IMR-90 (cell line): ENCODE measurements at regions of chr1 and their contacts with region 1.

Region 1: GRCh38 chr1:244272471-244273261 is 179.0 kb downstream of the ADSS2 start:
- DNase-seq: peak; percentile 92
- ATAC-seq: peak; percentile 61
- H3K4me3 ChIP-seq: no peak overlapping the region
- H3K27ac ChIP-seq: no peak overlapping the region
- H3K4me1 ChIP-seq: peaks cover 9% of the 10 kb centered on the region; the same call in 1 of the 2 replicates
- H3K27me3 ChIP-seq: no peaks in the 10 kb centered on the region
- CTCF ChIP-seq: peak; percentile 100
- POLR2A ChIP-seq: no peak
- RAD21 ChIP-seq: peak; percentile 99

Region 2: DNA sequence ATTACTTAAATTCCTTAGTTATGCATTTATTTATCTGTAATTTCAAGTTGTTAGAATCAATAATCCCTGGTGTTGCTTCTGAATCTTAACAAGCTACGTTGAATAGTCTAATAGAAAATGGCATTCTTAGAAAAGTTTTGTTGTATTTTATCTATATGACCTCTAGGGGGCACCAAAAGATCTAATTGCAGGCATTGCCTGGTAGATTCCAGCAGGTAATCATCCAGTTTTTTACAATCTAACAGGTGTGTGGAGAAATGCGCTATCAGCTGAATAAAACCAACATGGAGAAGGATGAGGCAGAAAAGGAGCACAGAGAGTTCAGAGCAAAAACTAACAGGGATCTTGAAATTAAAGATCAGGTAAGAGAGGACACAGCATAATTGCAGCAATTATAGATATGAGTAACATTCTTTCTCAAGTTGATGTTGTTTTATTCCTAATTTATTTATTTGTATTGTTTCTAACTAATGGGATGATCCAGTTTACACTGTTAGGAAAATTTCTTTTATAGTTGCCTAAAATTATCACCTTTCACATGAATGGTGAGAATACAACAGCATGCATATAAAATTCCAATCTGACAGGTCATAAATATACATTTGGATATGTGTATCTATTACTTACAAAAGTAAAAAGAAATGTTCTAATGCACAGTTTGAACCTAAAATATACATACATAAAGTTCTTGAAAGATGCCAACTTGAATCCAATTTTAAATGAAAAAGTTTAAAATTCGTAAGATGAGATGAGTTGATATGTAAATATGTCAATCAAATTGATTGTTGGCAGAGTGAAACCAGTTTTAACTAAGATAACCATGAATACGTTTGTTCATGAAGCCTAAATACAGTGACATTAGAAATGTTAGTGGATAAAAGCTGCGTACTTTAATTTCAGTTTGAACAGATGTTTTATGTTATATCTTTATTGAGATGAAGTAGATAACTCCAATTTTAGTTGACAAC is 928.4 kb before region 1 on chr1:
- CTCF ChIA-PET with region 1: interaction called, 3 read pairs
- POLR2A ChIA-PET with region 1: no interaction called
- dilution Hi-C with region 1: no loop called
- in situ Hi-C with region 1: loop called (anchors 5 kb)
- intact Hi-C with region 1: loop called (anchors 1 kb)
- DNase-seq: peak; percentile 40
- ATAC-seq: peak; percentile 62; the same call in 1 of the 2 replicates
- H3K4me3 ChIP-seq: no peak overlapping the region
- H3K27ac ChIP-seq: no peak overlapping the region
- H3K4me1 ChIP-seq: no peaks in the 10 kb centered on the region
- H3K27me3 ChIP-seq: no peaks in the 10 kb centered on the region
- CTCF ChIP-seq: peak; percentile 72
- POLR2A ChIP-seq: no peak
- RAD21 ChIP-seq: peak; percentile 78

Region 3: GRCh38 chr1:243708210-243708609 is 564.5 kb before region 1 on chr1:
- CTCF ChIA-PET with region 1: interaction called, 4 read pairs
- POLR2A ChIA-PET with region 1: no interaction called
- dilution Hi-C with region 1: no loop called
- in situ Hi-C with region 1: no loop called
- intact Hi-C with region 1: loop called (anchors 2 kb)
- DNase-seq: no peak
- ATAC-seq: no peak
- H3K4me3 ChIP-seq: no peak overlapping the region
- H3K27ac ChIP-seq: no peak overlapping the region
- H3K4me1 ChIP-seq: peaks cover 2% of the 10 kb centered on the region; the same call in 1 of the 2 replicates
- H3K27me3 ChIP-seq: no peaks in the 10 kb centered on the region
- CTCF ChIP-seq: peak; percentile 42
- POLR2A ChIP-seq: no peak
- RAD21 ChIP-seq: peak; percentile 50

Region 4: GRCh38 chr1:243842978-243843511 is 429.6 kb before region 1 on chr1:
- CTCF ChIA-PET with region 1: no interaction called
- POLR2A ChIA-PET with region 1: no interaction called
- dilution Hi-C with region 1: no loop called
- in situ Hi-C with region 1: loop called (anchors 10 kb)
- intact Hi-C with region 1: loop called (anchors 2 kb)
- DNase-seq: peak; percentile 89
- ATAC-seq: peak; percentile 92
- H3K4me3 ChIP-seq: peak overlapping the region; percentile 25; the same call in 1 of the 2 replicates
- H3K27ac ChIP-seq: peak overlapping the region; percentile 78
- H3K4me1 ChIP-seq: peaks cover 5% of the 10 kb centered on the region
- H3K27me3 ChIP-seq: no peaks in the 10 kb centered on the region
- CTCF ChIP-seq: no peak
- POLR2A ChIP-seq: no peak
- RAD21 ChIP-seq: no peak

Region 5: DNA sequence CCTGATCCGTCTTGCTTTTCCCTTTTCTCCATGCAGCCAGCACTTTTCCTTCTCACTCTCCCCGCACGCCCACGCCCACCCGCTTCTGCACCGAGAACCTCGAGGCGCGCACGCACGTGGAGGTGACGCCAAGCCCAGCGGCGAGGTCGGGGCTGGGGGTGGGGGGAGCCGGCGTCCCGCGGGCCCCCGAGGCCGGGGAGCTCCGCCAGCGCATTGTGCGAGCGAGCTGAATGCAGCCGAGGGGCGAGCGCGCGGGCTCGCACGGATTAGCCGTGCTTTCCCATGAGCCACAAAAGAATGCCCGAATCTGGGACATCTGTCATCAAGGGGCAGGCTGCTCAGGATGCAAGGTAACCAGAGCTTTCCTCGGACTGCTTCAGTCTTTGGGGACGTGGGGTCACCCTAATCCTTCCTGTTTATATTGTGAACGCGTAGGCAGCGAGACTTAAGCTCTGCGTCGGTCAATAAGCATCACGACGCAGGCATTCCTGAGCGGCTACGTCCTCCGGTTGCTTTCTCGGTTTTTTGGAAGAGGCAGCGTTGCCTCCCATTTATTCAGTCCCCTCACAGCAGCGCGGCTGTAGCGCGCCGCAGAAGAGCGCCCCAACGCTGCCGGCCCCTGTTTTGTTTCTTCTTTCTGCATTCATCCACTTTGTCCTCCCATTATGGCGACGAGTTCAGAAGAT is 355.3 kb before region 1 on chr1:
- CTCF ChIA-PET with region 1: no interaction called
- POLR2A ChIA-PET with region 1: interaction called, 3 read pairs
- dilution Hi-C with region 1: no loop called
- in situ Hi-C with region 1: no loop called
- intact Hi-C with region 1: loop called (anchors 2 kb)
- DNase-seq: peak; percentile 93
- ATAC-seq: peak; percentile 97
- H3K4me3 ChIP-seq: peak overlapping the region; percentile 51
- H3K27ac ChIP-seq: peak overlapping the region; percentile 27
- H3K4me1 ChIP-seq: peaks cover 8% of the 10 kb centered on the region
- H3K27me3 ChIP-seq: no peaks in the 10 kb centered on the region
- CTCF ChIP-seq: 0 out of 2 replicates have a peak, but pooled peaks have one; percentile 11
- POLR2A ChIP-seq: peak; percentile 92
- RAD21 ChIP-seq: peak; percentile 15; the same call in 1 of the 2 replicates

Region 6: DNA sequence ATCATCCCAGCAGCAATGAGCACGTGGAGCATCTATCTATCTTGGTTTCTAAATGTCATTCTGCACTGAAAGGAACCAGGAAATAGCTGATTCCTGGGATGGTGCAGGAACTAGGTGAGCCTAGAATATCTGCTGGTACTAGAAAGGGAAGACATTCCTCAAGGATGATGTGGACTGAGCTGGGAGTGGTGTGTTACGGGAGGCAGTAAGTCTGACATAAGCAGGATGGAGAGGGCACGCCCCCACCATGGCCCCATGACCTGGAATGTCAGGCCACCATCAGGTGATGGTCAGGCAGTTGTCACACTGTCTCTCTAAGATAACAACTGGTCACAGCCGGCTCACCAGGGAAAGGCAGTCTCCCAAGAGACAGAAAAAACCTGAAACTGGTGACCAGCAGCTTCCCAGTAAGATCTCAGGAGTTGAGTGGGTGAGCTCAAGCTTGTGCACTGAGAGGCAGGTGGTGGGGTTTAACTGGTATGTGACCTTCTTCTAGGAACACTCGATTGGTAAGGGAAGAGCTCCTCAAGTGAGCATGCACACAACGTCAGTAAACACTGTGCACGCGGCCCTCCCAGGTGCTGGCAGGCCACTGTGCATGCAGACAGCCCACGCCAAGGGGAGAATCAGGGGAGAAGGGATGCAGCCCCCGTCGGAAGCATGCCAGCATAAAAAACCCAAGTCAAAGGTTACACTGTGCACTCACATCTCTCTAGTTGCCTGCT is 30.4 kb after region 1 on chr1:
- CTCF ChIA-PET with region 1: no interaction called
- POLR2A ChIA-PET with region 1: no interaction called
- dilution Hi-C with region 1: no loop called
- in situ Hi-C with region 1: no loop called
- intact Hi-C with region 1: loop called (anchors 1 kb)
- DNase-seq: peak; percentile 54
- ATAC-seq: peak; percentile 66
- H3K4me3 ChIP-seq: no peak overlapping the region
- H3K27ac ChIP-seq: no peak overlapping the region
- H3K4me1 ChIP-seq: no peaks in the 10 kb centered on the region
- H3K27me3 ChIP-seq: no peaks in the 10 kb centered on the region
- CTCF ChIP-seq: no peak
- POLR2A ChIP-seq: no peak
- RAD21 ChIP-seq: no peak

Region 7: DNA sequence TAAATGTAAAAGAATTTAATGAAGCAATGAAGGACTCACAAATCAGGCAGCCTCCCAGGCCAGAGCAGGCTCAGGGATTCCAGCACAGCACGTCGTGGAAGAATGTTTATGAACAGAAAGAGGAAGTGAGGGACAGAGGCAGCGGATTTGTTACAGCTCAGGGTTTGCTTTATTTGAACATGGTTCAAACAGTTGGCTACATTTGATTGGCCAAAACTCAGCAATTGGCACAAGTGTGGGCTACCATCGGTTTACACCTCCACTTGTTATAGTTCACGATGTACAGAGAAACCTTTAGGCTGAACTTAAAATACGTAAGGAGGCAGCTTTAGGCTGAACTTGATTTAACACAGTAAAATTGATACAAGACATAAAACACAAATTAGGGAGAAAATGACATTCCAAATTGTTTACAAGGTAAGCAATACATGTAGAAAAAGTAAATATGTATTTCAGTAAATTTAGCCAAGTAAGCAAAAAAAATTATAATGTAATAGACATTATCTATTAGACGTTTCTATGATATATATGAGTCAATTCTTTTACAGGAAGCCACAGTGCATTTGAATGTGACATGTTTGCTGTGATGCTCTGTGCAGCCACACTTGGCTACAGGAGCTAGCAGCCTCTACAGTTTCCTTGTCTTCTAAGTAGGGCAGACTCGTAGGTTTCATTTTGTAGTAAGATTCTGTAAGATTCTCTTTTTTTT is 52.5 kb after region 1 on chr1:
- CTCF ChIA-PET with region 1: no interaction called
- POLR2A ChIA-PET with region 1: no interaction called
- dilution Hi-C with region 1: no loop called
- in situ Hi-C with region 1: no loop called
- intact Hi-C with region 1: no loop called
- DNase-seq: peak; percentile 47
- ATAC-seq: peak; percentile 38
- H3K4me3 ChIP-seq: no peak overlapping the region
- H3K27ac ChIP-seq: 0 out of 2 replicates have a peak overlapping the region, but pooled peaks have one; percentile 35
- H3K4me1 ChIP-seq: peaks cover 7% of the 10 kb centered on the region
- H3K27me3 ChIP-seq: no peaks in the 10 kb centered on the region
- CTCF ChIP-seq: no peak
- POLR2A ChIP-seq: no peak
- RAD21 ChIP-seq: no peak

Region 8: DNA sequence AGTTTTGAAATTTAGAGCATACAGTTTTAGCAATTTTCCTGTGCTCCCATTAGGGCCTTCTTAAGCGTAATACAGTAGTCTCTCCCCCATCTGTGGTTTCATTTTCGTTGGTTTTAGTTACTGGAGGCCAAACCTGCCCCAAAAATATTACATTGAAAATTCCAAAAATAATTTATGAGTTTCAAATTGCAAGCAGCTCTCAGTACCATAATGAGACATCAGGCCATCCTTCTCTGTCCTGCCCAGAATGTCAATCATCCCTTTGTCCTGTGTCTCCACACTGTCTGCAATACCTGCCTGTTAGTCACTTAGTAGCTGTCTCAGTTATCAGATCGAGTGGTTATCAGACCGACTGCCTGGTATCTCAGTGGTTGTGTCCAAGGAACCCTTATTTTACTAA is 133.7 kb after region 1 on chr1:
- CTCF ChIA-PET with region 1: no interaction called
- POLR2A ChIA-PET with region 1: no interaction called
- dilution Hi-C with region 1: no loop called
- in situ Hi-C with region 1: no loop called
- intact Hi-C with region 1: no loop called
- DNase-seq: no peak
- ATAC-seq: no peak
- H3K4me3 ChIP-seq: no peak overlapping the region
- H3K27ac ChIP-seq: no peak overlapping the region
- H3K4me1 ChIP-seq: no peaks in the 10 kb centered on the region
- H3K27me3 ChIP-seq: no peaks in the 10 kb centered on the region
- CTCF ChIP-seq: no peak
- POLR2A ChIP-seq: no peak
- RAD21 ChIP-seq: no peak